Ascending aorta (tissue), 2 donors: ENCODE measurements at regions of chr3 and their contacts with region 1.

Region 1: GRCh38 chr3:12143949-12144504 is 14.7 kb downstream of the TIMP4 start:
- DNase-seq: peak; percentile 70 to 97
- H3K4me3 ChIP-seq: peak overlapping the region in 1 of 2 donors; percentile 9
- H3K27ac ChIP-seq: peak overlapping the region; percentile 87 to 96
- H3K4me1 ChIP-seq: peaks cover 23 to 45% of the 10 kb centered on the region in 2 donors
- H3K27me3 ChIP-seq: no peaks in the 10 kb centered on the region
- CTCF ChIP-seq: peak in 1 of 3 experiments; percentile 15

Region 2: DNA sequence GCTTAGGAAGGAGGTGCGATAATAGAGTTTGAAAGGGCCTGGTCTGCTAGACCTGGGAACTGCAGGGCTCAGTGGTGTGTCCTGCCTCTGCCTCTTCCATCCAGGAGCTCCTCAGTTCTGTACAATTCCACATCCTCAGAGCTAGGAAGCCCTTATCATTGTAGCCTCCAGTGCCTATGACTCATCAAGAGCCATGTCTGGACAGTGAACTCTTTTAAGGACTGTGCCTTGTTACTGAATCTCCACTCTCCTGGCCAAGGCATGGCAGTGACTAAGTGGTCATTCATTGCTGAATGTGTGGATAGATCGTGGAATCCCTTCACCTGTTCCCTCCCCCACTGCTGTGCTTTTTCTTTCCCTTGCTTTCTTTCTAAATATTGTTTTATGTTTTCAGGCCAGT is 11.8 kb after region 1 on chr3:
- intact Hi-C with region 1: loop called (anchors 1 kb)
- DNase-seq: peak; percentile 46 to 79
- H3K4me3 ChIP-seq: no peak overlapping the region
- H3K27ac ChIP-seq: peak overlapping the region; percentile 36 to 45
- H3K4me1 ChIP-seq: peaks cover 0 to 12% of the 10 kb centered on the region in 2 donors
- H3K27me3 ChIP-seq: no peaks in the 10 kb centered on the region
- CTCF ChIP-seq: no peak

Region 3: DNA sequence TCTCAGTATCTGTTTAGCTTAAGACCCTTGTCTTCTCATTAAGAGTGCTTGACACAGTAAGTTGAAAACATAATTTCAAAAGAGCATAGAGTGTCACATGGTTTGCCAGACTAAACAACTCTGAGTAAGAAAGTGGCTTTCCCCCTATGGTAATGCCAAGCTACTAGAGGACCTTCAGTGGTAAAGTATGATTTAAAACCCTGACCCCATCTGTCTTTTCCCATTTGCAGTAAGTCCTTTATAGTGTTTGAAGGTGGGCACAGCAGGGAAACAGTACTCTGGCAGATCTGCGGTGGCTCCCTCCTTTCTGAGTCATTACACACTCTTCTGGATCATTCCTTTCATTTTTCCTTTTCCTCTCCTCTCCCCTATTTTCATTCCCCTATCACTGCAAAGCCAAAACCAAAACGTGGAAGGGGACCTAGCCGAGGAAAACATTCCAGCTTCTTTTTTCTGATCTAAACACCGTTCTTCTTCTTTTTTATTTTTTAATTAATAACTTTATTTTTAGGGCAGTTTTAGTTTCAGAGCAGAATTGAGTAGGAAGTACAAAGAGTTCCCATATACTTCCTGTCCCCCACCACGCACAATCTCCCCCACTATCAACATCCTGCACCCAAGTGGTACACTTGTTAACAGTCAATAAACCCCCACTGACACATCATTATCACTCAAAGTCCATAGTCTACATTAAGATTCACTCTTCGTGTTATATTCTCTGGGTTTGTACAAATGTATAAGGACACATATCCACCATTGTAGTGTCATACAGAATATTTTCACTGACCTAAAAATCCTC is 219.6 kb after region 1 on chr3:
- intact Hi-C with region 1: no loop called
- DNase-seq: no peak
- H3K4me3 ChIP-seq: no peak overlapping the region
- H3K27ac ChIP-seq: no peak overlapping the region
- H3K4me1 ChIP-seq: no peaks in the 10 kb centered on the region
- H3K27me3 ChIP-seq: no peaks in the 10 kb centered on the region
- CTCF ChIP-seq: no peak